Activated CD4-positive, alpha-beta T cell treated with anti-CD3 and anti-CD28 coated beads, Interleukin-2, amount 10 ng/mL, durations not matched to agents 24 days and 14 days (primary cell): ENCODE measurements at regions of chr5 and their contacts with region 1.

Region 1: DNA sequence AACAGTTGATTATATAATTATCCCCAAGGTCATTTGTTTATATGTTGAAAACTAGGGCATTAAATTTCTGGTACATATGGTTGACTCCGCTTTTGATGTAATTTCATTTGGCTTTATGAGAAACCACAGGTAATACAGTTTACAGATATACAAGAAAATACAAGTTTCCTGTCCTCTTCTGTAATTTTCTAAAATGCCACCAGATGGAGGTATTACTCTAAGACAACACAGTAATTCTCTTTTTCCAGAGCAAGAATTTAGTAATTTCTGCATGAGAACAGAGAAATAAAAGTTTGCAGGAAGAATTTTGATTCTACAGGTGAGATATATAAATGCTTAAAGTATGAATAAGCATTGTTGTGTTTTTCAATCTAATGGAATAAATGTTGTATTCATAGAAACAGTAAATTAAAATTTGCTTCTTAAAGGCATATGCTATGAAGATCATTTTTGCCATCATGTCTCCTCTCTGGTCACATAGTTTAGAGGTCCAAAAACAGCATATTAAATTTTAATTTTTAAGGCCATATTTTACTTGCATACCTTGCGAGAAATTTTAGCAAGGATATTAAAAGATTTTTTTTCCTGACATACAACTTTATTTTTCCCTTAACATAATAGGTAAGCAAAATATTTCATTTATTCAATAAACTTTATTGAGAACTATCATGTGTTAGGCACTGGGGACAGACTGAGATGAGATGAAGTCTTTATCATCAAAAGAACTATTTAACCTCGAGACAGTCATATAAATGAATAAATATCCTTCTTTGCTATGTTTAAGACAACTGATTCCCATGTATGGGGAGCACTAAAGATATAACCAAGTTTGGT is 22.7 kb downstream of the CHD1 start:
- DNase-seq: no peak
- H3K4me3 Mint-ChIP-seq: no peak overlapping the region
- H3K27ac Mint-ChIP-seq: peak overlapping the region; percentile 1
- H3K4me1 Mint-ChIP-seq: peaks cover 31% of the 10 kb centered on the region
- H3K27me3 Mint-ChIP-seq: no peaks in the 10 kb centered on the region

Region 2: DNA sequence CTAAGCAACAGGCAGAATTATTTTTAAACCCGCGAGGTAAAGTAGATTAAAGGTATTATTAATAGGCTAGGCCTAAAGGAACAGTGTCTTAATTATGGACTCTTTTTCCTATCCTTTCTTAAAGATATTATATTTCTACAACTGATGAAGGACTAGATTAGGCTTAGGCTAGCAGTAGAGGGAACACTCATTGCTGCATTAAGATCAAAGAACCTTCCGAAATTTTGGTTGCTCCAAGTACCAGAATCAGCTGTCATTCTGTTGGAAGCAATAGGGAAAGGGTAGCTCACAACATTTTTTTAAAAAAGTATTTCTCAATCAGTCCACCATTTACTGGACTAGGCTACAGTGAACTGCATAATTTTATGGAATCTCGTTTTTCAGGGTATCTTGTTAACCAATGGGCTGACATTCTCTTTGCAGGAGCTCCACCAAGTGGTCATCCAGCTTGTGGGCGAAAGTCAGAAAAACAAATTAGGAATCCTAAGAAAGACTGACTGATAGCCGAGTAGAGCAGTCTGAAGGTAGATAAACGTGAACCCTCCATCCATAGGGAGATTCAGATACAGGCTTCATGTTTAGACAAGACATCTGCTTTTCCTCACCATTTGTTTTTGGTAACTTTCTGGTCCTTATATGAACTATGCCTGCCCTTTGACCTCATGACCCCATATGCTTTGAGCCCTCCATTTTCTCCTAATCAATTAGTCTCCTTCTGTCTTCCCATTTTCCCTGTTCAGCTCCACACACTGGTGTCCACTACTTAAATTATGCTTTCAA is 126.3 kb after region 1 on chr5:
- intact Hi-C with region 1: loop called (anchors 1 kb)
- DNase-seq: peak; percentile 73
- H3K4me3 Mint-ChIP-seq: peak overlapping the region; percentile 77
- H3K27ac Mint-ChIP-seq: peak overlapping the region; percentile 81
- H3K4me1 Mint-ChIP-seq: peaks cover 61% of the 10 kb centered on the region
- H3K27me3 Mint-ChIP-seq: no peaks in the 10 kb centered on the region

Region 3: DNA sequence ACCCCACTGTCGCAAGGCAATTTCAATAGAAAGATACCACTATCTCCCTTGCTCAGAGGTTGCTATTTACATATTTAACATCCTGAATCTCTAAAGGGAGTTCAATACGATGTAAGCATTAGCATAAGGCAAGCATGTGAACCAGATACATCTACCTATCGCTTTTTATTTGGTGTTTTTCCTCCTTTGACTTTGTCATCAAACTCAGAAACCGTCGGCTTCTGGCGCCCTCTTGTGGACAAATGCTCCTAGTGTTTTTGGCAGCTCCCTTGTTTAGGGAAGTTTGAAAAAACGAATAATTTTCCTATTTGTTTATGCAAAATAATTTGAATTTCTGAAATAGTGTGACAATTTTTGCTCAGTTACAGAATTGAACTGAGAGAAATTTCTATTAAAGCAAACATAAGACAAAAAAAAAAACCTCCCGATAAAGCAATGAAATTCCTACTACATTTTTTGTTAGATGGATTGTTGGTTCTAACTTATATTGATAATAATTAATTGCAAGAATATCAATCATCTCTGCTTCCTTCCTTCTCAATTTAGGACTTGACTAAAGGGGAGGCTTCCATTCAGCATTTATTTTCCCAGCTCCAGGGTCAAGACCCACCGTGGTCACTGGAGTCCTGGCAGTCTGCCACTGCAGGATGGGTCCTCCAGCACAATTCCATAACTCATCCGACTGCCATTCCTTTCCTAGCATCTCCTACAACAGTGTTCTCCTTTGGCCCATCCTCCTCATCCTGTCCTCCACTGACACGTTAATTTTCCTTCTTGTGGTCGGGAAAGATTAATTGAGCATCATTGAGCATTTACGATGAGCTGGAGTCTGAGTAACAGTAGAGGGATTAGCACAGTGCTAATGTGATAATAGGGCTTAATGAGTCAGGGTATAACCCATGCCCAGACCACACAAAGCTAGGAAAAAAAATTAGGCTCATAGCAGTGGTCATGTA is 154.5 kb after region 1 on chr5:
- intact Hi-C with region 1: loop called (anchors 1 kb)
- DNase-seq: peak; percentile 95
- H3K4me3 Mint-ChIP-seq: no peak overlapping the region
- H3K27ac Mint-ChIP-seq: no peak overlapping the region
- H3K4me1 Mint-ChIP-seq: peaks cover 1% of the 10 kb centered on the region
- H3K27me3 Mint-ChIP-seq: peaks cover 17% of the 10 kb centered on the region